Posterior vena cava (tissue), 2 donors: ENCODE measurements at regions of chr20 and their contacts with region 1.

Region 1: GRCh38 chr20:8656335-8656734 is 412.6 kb upstream of the PLCB4 start:
- DNase-seq: no peak

Region 2: GRCh38 chr20:8562356-8562755 is 94.0 kb before region 1 on chr20:
- intact Hi-C with region 1: loop called in 1 of 2 experiments (anchors 5 kb)
- DNase-seq: no peak

Region 3: GRCh38 chr20:9081423-9081966 is 425.2 kb after region 1 on chr20:
- intact Hi-C with region 1: no loop called
- DNase-seq: no peak